ENCODE measurements at regions of chr14 and their contacts with region 1.

Region 1: DNA sequence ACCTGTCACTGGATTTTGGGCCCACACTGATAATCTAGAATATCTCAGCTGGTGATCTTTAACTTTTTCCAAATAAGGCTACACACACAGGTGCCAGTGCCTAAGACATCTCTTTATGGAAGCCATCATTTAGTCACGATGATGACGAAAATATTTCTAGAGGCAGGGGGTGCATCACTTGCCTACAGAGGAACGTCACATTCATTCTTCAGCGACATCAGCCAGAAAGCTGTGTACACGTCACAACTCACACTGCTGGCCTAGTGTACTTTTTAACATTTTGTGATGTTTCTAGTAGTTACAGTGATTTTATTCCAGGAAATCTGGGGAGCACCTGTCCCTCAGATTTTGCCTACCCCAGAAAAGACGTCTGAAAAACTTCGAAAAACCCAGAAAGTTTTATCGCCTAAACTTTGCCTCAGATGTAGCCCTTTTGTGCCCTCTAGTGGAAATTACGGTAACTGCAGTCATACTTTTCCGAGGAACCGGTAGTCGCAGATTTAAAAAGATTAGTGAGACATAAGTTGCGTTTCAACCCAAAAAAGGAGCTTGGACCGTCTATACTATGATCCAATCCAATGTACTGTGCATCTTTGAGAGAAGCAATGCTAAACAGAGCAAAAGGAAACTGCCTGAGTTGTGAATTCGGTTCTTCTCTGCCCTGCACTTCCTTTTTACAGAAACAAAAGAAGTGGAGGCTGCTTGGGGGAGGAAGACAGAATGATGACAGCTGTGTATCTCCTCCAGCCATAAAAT is 64.3 kb upstream of the STON2 start:
- DNase-seq: peak; percentile 68 to 84 (median 77)
- H3K4me3 ChIP-seq: peak overlapping the region in 6 of 7 experiments; percentile 58 to 98 (median 88)
- H3K27ac ChIP-seq: peak overlapping the region in 1 of 2 experiments; percentile 67
- H3K4me1 ChIP-seq: peaks cover 0 to 4% (median 4%) of the 10 kb centered on the region in 4 experiments
- H3K27me3 ChIP-seq: no peaks in the 10 kb centered on the region

Region 2: DNA sequence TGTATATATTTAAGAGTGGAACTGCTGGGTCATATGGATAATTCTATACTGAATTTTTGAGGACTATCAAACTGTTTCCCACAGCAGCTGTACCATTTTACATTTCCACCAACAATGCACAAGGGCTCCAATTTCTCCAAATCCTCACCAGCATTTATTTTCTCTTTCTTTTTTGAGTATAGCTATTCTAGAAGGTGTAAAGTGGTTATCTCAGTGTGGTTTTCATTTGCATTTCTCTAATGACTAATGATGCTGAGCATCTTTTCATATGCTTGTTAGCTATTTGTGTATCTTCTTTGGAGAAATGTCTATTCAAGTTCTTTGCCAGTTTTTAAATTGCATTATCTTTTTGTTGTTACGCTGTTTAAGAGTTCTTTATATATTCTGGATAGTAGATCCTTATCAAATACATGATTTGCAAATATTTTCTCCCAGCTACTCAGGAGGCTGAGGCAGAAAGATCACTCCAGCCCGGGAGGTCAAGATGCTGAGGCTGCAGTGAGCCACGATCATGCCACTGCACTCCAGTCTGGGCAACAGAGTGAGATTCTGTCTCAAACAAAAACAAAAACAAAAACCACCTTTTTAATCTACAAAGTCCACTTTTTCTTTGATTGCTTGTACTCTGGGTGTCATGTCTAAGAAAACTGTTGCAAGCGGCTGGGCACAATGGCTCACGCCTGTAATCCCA is 276.4 kb before region 1 on chr14:
- CTCF ChIA-PET with region 1: no interaction called
- POLR2A ChIA-PET with region 1: no interaction called
- DNase-seq: no peak
- H3K4me3 ChIP-seq: no peak overlapping the region
- H3K27ac ChIP-seq: no peak overlapping the region
- H3K4me1 ChIP-seq: no peaks in the 10 kb centered on the region
- H3K27me3 ChIP-seq: no peaks in the 10 kb centered on the region

Region 3: DNA sequence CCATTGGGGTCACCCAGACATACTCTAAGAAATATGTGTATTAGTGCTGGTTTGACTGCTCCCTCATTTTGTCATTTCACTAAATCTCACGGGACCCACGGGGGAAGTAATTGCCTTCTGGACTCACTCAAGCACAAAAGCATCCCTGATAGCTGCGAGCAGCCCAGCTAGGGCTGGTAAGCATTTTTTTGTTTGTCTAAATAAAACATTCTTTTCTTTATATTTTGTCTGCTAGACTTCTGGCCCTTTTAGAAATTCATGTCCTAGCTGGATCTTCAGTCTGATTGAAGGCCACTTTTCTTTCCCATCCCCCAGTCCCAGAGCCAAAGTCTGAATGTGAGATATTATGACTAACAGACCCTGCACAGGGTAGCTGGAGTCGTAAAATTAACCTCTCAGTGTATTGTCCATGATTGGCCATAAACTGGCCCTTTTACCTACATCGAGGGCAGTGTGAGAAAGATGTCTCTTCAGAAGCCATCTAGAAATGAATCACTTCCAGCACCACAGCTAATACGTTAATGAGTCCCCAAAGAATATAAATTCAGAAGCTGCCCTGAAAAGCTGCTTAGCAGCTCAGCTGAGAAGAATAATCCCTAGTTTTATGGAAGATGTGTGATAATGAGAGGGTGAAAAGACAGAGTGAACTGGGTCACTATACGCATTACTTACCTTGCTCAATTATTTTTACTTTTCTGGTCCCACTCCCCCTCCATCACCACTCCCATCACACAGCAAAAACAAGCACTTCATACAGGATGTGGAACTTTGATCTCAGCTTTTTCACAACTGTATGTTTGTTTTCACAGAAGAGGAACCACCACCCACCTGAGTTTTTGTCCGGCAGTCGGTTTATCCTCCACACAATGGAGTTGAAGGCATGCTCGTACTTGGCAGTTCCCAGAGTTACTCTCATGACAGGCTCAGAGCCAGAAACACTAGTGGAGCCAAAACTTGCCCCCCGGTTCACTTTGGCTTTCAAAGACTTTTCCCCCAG is 188.1 kb before region 1 on chr14:
- CTCF ChIA-PET with region 1: interaction called, 285 read pairs
- POLR2A ChIA-PET with region 1: no interaction called
- DNase-seq: no peak
- H3K4me3 ChIP-seq: no peak overlapping the region
- H3K27ac ChIP-seq: no peak overlapping the region
- H3K4me1 ChIP-seq: peaks cover 0 to 12% (median 0%) of the 10 kb centered on the region in 4 experiments
- H3K27me3 ChIP-seq: no peaks in the 10 kb centered on the region

Measured in common myeloid progenitor, CD34-positive (primary cell).